MCF 10A (cell line): ENCODE measurements at regions of chr10 and their contacts with region 1.

Region 1: GRCh38 chr10:84613336-84614021 is 285.1 kb downstream of the CCSER2 start:
- DNase-seq: peak; percentile 70
- H3K4me3 Mint-ChIP-seq: no peak overlapping the region
- H3K27ac Mint-ChIP-seq: no peak overlapping the region
- H3K4me1 Mint-ChIP-seq: no peaks in the 10 kb centered on the region
- H3K27me3 Mint-ChIP-seq: no peaks in the 10 kb centered on the region
- CTCF ChIP-seq: peak; percentile 22

Region 2: GRCh38 chr10:84531396-84531795 is 82.1 kb before region 1 on chr10:
- CTCF ChIA-PET with region 1: no interaction called
- POLR2A ChIA-PET with region 1: no interaction called
- intact Hi-C with region 1: no loop called
- DNase-seq: no peak
- H3K4me3 Mint-ChIP-seq: no peak overlapping the region
- H3K27ac Mint-ChIP-seq: no peak overlapping the region
- H3K4me1 Mint-ChIP-seq: peaks cover 5% of the 10 kb centered on the region
- H3K27me3 Mint-ChIP-seq: no peaks in the 10 kb centered on the region
- CTCF ChIP-seq: no peak

Region 3: GRCh38 chr10:84715911-84716310 is 102.4 kb after region 1 on chr10:
- CTCF ChIA-PET with region 1: interaction called, 3 read pairs
- POLR2A ChIA-PET with region 1: no interaction called
- intact Hi-C with region 1: loop called (anchors 5 kb)
- DNase-seq: peak; percentile 66
- H3K4me3 Mint-ChIP-seq: no peak overlapping the region
- H3K27ac Mint-ChIP-seq: no peak overlapping the region
- H3K4me1 Mint-ChIP-seq: no peaks in the 10 kb centered on the region
- H3K27me3 Mint-ChIP-seq: peaks cover 17% of the 10 kb centered on the region
- CTCF ChIP-seq: peak; percentile 35

Region 4: DNA sequence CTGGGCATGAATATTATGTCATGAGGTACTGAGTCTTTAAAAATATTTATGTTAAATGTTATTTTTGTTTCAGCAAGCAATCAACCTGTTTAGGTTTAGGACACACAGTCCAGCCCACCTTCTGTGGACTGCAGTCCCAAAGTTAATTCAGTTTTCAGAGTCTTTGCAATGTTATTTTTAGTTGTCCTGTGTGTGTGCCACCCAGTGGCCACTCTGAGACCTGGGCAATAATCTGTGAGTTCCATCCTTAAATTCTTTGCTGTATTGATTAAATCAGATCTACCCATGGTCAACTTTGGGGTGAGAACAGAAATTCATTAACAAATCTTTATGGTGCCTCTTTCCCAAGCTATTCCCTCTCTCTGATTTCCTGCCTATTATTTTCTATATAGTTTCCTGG is 130.0 kb after region 1 on chr10:
- CTCF ChIA-PET with region 1: interaction called, 13 read pairs
- POLR2A ChIA-PET with region 1: no interaction called
- intact Hi-C with region 1: no loop called
- DNase-seq: peak; percentile 26
- H3K4me3 Mint-ChIP-seq: no peak overlapping the region
- H3K27ac Mint-ChIP-seq: no peak overlapping the region
- H3K4me1 Mint-ChIP-seq: no peaks in the 10 kb centered on the region
- H3K27me3 Mint-ChIP-seq: no peaks in the 10 kb centered on the region
- CTCF ChIP-seq: peak; percentile 28